Activated naive CD4-positive, alpha-beta T cell treated with anti-CD3 and anti-CD28 coated beads, Interleukin-2, amount 10 ng/mL, durations not matched to agents 7 days and 5 days (primary cell): ENCODE measurements at regions of chr18 and their contacts with region 1.

Region 1: DNA sequence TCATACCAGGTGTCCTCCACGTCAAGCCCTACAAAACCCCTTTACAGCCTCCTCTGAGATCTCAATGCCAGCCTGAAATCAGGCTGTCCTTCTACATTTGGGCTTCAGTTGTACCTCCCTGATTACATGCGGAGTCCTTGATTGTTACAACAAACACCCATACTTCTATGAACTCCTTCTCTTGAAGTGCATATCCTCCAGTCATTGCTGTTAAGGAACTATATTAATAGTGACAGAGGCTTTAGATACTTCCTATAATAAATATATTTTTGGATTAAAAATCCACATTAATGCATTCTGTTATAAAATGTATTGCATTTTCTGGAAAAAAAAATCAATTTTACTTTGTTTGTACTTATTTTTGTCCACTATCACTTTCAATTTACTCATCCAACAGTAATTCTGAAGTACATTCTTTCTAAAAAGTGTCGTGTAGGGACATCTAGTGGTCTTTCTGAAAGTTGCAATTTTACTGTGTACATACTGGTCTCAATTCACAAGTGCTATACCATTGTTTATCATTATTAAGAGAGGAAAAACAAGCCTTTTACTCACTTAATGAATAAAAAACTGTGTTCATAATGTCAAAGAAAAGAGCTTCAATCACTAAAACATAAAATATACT is 316.4 kb downstream of the DSEL start:
- DNase-seq: no peak
- H3K4me3 Mint-ChIP-seq: no peak overlapping the region
- H3K27ac Mint-ChIP-seq: no peak overlapping the region
- H3K4me1 Mint-ChIP-seq: no peaks in the 10 kb centered on the region
- H3K27me3 Mint-ChIP-seq: no peaks in the 10 kb centered on the region

Region 2: DNA sequence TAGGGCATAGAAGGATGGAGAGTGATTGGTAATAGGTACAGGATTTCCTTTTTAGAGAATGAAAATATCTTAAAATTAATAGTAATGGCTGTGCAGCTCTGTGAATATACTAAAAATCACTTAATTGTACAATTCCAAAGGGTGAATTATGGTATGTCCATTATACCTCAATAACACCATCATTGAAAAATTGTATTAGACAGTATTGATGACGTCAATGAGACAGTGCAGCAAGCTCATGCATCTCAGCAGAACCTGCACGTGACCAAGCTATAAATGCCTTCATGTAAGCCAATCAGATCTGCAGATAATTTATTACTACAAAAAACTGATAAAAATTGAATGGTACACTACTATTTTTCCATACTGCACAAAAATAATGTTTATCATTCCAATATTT is 241.8 kb before region 1 on chr18:
- CTCF ChIA-PET with region 1: no interaction called
- DNase-seq: no peak
- H3K4me3 Mint-ChIP-seq: no peak overlapping the region
- H3K27ac Mint-ChIP-seq: no peak overlapping the region
- H3K4me1 Mint-ChIP-seq: no peaks in the 10 kb centered on the region
- H3K27me3 Mint-ChIP-seq: no peaks in the 10 kb centered on the region

Region 3: DNA sequence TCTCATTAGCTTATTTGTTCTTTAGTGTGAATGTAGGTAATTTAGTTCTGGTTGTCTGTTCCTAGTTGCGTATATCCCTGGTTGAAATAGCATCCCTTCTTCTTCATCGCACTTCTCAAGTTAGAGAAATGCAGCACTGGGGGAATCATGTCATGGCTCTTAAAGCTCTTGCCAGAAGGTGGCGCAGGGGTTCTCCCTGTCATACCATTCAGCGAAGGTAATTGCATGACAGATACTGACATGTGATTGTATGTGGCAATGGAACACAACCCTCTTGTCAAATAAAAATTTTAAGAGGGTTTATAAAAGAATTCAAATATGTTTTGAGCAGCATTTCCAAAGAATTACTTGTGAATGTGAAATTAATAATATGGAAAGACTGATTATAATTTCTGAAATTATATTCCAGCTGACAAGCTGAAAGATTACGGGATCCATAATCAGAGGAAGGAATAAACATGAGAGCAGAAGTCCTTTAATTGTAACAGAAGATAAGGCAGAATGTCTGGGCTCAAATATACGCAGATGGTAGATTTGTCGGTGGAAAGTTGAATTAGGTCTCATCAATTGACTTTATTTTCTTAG is 95.3 kb before region 1 on chr18:
- CTCF ChIA-PET with region 1: interaction called, 12 read pairs
- DNase-seq: peak; percentile 51
- H3K4me3 Mint-ChIP-seq: no peak overlapping the region
- H3K27ac Mint-ChIP-seq: no peak overlapping the region
- H3K4me1 Mint-ChIP-seq: no peaks in the 10 kb centered on the region
- H3K27me3 Mint-ChIP-seq: no peaks in the 10 kb centered on the region